HEK293 (cell line): ENCODE measurements at regions of chr2 and their contacts with region 1.

Region 1: DNA sequence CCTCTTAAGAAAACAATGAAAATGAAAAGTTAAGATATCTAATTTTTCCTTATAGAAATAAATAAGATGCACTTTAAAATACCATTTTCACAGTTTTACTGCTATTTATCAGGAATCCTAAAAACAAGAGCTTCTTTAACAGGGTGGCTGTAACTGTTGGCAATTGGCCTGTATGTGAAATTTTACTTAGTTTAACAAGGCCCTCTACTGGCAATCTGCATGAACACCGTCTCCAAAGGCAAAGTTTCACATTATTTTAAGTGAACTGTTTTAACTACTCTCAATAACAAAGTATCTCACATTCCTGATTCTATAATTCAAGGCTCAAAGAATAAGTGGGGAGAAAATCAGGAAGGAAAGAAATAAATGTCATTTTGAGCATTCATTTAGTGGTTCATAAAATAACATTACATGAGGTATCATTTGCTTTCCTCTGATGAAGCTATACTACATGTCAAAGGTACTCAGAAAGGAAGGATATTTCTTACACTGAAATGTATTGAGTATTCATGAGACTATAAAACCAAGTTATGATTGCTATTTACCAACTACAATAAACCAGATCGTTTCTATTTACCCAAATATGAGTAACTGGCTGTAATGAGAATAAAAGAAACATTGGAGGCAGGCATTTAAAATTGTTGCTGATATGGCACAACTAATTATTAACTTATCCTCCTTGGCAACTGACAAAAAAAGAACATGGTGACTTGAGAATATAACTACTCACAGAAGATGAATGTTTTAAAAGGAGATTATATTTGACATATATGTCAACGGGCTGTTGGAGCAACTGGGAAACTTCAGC is 7.0 kb downstream of the NCKAP5 start:
- H3K4me3 ChIP-seq: no peak overlapping the region
- H3K27ac ChIP-seq: no peak overlapping the region
- H3K4me1 ChIP-seq: no peaks in the 10 kb centered on the region
- CTCF ChIP-seq: peak; percentile 59

Region 2: GRCh38 chr2:133171393-133172004 is 389.8 kb before region 1 on chr2:
- CTCF ChIA-PET with region 1: interaction called, 17 read pairs
- POLR2A ChIA-PET with region 1: no interaction called
- H3K4me3 ChIP-seq: no peak overlapping the region
- H3K27ac ChIP-seq: no peak overlapping the region
- H3K4me1 ChIP-seq: no peaks in the 10 kb centered on the region
- CTCF ChIP-seq: peak; percentile 50; the same call in 1 of the 2 replicates

Region 3: DNA sequence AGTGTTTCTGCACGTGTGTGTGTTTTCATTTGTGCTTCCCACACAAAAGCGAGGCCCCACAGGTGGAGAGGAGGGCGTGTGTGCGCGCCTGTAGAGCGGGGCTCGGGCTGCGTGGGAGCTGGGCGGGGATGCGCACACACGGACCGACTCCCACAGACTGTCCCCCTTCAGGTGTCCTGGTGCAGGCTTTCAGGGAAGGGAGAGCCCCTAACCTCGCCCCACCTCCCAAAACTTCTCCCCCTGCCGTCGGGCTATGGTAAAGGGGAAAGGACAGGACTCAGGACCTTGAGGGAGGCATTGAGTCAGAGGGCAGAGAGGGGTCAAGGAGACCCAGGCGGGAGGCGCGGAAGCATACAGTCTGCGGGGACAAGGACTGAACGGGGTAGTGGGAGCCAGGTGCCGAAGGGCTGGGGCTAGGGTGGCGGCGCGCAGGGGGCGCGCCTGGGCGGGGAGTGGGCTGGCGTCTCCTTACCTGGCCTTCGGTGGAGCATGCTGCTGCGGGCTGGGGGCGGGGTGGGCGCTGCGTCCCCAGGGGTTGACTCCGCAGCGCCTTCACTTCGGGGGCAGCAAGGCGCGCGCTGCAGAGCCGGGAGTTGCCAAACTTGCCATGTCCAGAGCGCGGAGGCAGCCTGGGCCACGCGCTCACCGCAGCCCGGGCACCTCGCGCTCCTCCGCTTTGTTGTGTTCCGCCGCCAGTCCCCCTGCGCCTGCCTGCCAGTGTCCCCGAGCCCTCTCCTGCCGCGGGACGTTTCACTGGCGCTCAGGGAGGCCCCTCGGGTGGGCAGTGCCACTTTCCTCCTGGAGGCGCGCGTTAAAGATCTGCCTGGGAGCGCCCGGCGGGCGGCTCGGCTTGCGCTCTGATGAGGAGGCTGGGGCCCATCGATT is 295.0 kb before region 1 on chr2:
- CTCF ChIA-PET with region 1: interaction called, 22 read pairs
- POLR2A ChIA-PET with region 1: interaction called, 3 read pairs
- H3K4me3 ChIP-seq: peak overlapping the region; percentile 50
- H3K27ac ChIP-seq: peak overlapping the region; percentile 50; the same call in 1 of the 2 replicates
- H3K4me1 ChIP-seq: peaks cover 22% of the 10 kb centered on the region
- CTCF ChIP-seq: peak; percentile 89